GM12878 (cell line): ENCODE measurements at regions of chr3 and their contacts with region 1.

Region 1: DNA sequence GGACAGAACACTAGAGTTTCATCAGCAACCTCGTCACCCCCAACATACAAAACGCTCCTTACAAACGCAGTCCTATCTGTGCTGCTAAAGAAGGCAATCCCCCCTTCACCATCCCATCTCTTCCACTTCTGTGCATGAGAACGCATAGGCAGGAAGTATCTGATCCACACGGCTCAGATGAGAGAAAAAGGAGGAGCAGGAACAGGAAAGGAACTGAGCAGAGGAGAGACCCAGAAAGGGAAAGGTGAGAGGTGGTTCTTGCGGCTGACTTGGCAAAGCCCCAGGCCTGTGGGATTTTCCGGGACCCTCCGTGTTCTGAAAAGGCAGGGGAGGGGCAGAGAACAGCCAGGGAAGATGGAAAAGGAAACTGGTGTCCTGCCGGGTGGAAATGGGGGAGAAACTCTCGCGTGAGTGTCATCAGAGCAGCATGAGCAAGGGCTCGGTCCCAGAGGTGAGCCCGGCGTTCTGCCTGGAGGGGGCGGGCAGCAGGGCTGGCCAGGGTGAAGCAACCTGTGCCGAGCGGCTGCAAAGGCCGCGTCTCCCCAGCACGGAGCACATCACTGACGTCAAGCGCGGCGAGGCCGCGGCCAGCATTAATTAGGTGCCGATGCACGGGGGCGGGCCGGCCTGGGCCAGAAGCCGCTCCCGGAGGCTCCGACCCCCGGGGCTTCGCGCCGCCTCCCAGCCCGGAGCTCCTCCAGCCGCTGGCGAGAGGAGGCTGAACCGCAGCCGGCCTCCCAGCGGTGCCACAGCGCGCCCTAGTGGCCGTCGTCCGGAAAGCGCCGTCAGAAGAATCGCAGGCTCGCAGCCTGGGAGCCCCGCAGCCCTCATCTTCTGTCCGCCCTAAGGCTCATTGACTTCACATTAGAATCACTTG is 35.8 kb downstream of the CPN2 start:
- DNase-seq: peak; percentile 38
- ATAC-seq: peak; percentile 95
- H3K4me3 ChIP-seq: peak overlapping the region; percentile 57
- H3K27ac ChIP-seq: no peak overlapping the region
- H3K4me1 ChIP-seq: peaks cover 6% of the 10 kb centered on the region
- H3K27me3 ChIP-seq: no peaks in the 10 kb centered on the region; a peak in 1 of 4 replicates
- CTCF ChIP-seq: peak; percentile 82 to 96 (median 92)
- EP300 ChIP-seq: no peak
- POLR2A ChIP-seq: no peak
- RAD21 ChIP-seq: peak; percentile 98

Region 2: GRCh38 chr3:193780810-193781472 is 534.4 kb before region 1 on chr3:
- CTCF ChIA-PET with region 1: interaction called, 53 read pairs
- POLR2A ChIA-PET with region 1: no interaction called
- RAD21 ChIA-PET with region 1: interaction called, 21 read pairs
- SMC1A ChIA-PET with region 1: interaction called, 11 read pairs
- in situ Hi-C with region 1: loop called (anchors 5 kb)
- intact Hi-C with region 1: loop called (anchors 2 kb)
- DNase-seq: no peak
- ATAC-seq: peak; percentile 56
- H3K4me3 ChIP-seq: no peak overlapping the region
- H3K27ac ChIP-seq: no peak overlapping the region
- H3K4me1 ChIP-seq: no peaks in the 10 kb centered on the region
- H3K27me3 ChIP-seq: peaks cover 0 to 3% of the 10 kb centered on the region in 2 experiments; a peak in 2 of 4 replicates
- CTCF ChIP-seq: peak; percentile 47 to 62 (median 48); a peak in 5 of 6 replicates
- EP300 ChIP-seq: no peak
- POLR2A ChIP-seq: no peak
- RAD21 ChIP-seq: peak; percentile 85

Region 3: DNA sequence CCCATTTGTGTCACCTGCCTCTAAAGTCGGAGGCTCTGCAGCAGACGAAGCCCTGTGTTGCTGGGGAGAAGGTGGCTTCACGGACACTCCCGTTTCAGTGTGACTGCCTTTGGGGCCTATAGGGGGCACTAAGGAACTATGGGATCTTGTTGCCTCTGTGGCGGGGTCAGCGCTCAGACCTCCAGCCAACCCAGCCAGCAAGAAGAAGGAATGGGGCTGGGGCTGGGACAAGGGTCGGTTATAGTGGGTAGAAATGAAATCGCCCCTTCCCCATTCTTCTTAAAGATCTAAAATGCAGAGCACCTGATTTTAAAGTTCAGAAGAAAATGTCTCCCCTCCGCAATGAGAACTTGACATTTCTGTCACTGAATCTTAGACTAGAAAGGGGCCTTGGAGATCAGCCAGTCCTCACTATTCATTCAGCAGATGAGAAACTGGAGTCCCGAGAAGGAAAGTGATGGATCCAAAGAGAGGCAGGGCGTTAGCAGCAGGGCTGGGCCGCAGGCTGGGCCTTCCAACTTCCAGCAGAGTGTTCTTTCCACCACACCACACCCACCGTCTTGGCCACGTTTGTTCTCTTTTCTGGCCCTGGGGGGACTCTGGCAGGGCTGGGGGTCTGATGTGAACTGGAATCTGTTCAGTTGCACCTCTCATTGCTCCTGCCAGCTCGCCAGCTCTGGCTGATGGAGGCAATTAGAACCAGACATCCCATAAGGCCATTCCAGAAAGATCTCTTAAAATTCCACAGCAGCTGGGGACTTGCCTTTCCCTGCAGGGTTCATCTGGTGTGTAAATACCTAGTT is 526.9 kb before region 1 on chr3:
- CTCF ChIA-PET with region 1: interaction called, 18 read pairs
- POLR2A ChIA-PET with region 1: no interaction called
- RAD21 ChIA-PET with region 1: interaction called, 6 read pairs
- SMC1A ChIA-PET with region 1: interaction called, 4 read pairs
- in situ Hi-C with region 1: loop called (anchors 5 kb)
- intact Hi-C with region 1: loop called (anchors 2 kb)
- DNase-seq: peak; percentile 9
- ATAC-seq: peak; percentile 98
- H3K4me3 ChIP-seq: no peak overlapping the region
- H3K27ac ChIP-seq: no peak overlapping the region
- H3K4me1 ChIP-seq: no peaks in the 10 kb centered on the region
- H3K27me3 ChIP-seq: no peaks in the 10 kb centered on the region; a peak in 1 of 4 replicates
- CTCF ChIP-seq: peak; percentile 69 to 76 (median 76)
- EP300 ChIP-seq: no peak
- POLR2A ChIP-seq: no peak
- RAD21 ChIP-seq: peak; percentile 85

Region 4: GRCh38 chr3:193971261-193971751 is 344.0 kb before region 1 on chr3:
- CTCF ChIA-PET with region 1: interaction called, 3 read pairs
- POLR2A ChIA-PET with region 1: no interaction called
- RAD21 ChIA-PET with region 1: interaction called, 3 read pairs
- SMC1A ChIA-PET with region 1: no interaction called
- in situ Hi-C with region 1: no loop called
- intact Hi-C with region 1: loop called (anchors 10 kb)
- DNase-seq: peak; percentile 58
- ATAC-seq: peak; percentile 83
- H3K4me3 ChIP-seq: peak overlapping the region; percentile 23; the same call in 1 of the 2 replicates
- H3K27ac ChIP-seq: peak overlapping the region; percentile 35; the same call in 1 of the 2 replicates
- H3K4me1 ChIP-seq: peaks cover 14% of the 10 kb centered on the region
- H3K27me3 ChIP-seq: peaks cover 0 to 1% of the 10 kb centered on the region in 2 experiments; a peak in 2 of 4 replicates
- CTCF ChIP-seq: no peak
- EP300 ChIP-seq: no peak
- POLR2A ChIP-seq: no peak
- RAD21 ChIP-seq: no peak

Region 5: DNA sequence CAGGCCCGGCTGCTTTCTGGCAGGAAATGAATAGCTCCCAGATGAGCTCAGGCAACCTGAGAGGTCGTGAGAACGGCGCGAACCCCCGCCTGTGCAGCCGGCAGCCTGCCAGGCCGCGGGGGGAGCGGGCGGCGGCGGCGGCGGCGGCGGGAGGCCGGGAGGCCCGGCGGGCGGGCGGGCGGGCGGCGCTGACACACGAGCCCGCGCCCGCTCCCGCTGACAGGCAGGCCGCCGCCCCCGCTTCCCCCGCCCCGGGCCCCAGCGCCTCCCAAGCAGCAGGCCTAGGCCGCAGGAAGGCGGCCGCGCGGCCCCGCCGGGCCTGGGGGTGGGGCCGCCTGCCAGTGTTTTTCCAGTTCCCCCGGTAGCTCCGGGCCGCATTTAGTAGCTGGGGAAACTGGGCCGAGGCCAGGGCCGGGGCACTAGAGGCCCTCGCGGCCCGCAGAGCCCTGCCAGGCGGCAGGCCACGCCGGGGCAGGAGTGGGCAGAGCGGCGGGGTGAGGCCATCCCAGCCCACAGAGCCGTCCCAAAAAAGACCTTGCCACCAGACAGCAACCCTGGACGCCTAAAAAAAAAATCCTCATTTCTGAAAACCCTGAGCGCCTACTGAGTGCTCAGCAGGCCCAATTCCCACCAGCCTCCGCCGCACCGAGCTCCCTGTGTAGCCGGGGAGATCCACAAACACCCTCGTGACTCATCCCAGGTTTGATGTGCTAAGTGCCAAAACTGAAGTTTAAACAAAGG is 173.7 kb before region 1 on chr3:
- CTCF ChIA-PET with region 1: interaction called, 9 read pairs
- POLR2A ChIA-PET with region 1: no interaction called
- RAD21 ChIA-PET with region 1: interaction called, 5 read pairs
- SMC1A ChIA-PET with region 1: interaction called, 12 read pairs
- in situ Hi-C with region 1: no loop called
- intact Hi-C with region 1: loop called (anchors 2 kb)
- DNase-seq: no peak
- ATAC-seq: peak; percentile 56
- H3K4me3 ChIP-seq: peak overlapping the region; percentile 58; the same call in 1 of the 2 replicates
- H3K27ac ChIP-seq: no peak overlapping the region
- H3K4me1 ChIP-seq: peaks cover 9% of the 10 kb centered on the region
- H3K27me3 ChIP-seq: peaks cover 0 to 4% of the 10 kb centered on the region in 2 experiments; a peak in 3 of 4 replicates
- CTCF ChIP-seq: no peak
- EP300 ChIP-seq: no peak
- POLR2A ChIP-seq: peak; percentile 4; the same call in 1 of the 2 replicates
- RAD21 ChIP-seq: no peak

Region 6: DNA sequence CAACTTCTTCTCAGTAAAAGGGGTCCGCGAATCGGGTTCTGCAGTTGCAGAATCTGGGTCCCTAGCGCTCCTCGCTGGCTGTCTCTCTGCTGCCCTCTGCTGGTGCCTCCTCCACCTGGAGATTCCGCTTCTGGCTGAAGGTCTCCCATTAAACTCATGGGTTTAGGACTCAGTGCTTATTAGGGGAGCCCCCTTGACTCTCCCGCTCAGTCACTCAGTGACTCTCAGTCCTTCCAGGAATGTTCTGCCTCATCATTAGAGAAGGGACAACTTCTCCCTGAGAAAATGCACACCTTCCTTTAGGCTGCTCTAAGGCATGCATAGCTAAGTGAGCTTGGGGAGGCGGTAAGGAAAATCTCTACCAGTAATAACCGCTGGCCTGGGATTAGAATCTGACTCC is 28.7 kb after region 1 on chr3:
- CTCF ChIA-PET with region 1: interaction called, 11 read pairs
- POLR2A ChIA-PET with region 1: no interaction called
- RAD21 ChIA-PET with region 1: no interaction called
- SMC1A ChIA-PET with region 1: interaction called, 5 read pairs
- in situ Hi-C with region 1: no loop called
- intact Hi-C with region 1: no loop called
- DNase-seq: no peak
- ATAC-seq: peak; percentile 89
- H3K4me3 ChIP-seq: no peak overlapping the region
- H3K27ac ChIP-seq: no peak overlapping the region
- H3K4me1 ChIP-seq: no peaks in the 10 kb centered on the region
- H3K27me3 ChIP-seq: no peaks in the 10 kb centered on the region; a peak in 3 of 4 replicates
- CTCF ChIP-seq: peak; percentile 84 to 97 (median 91)
- EP300 ChIP-seq: no peak
- POLR2A ChIP-seq: no peak
- RAD21 ChIP-seq: peak; percentile 64

Region 7: GRCh38 chr3:194985031-194985578 is 669.8 kb after region 1 on chr3:
- CTCF ChIA-PET with region 1: no interaction called
- POLR2A ChIA-PET with region 1: no interaction called
- RAD21 ChIA-PET with region 1: no interaction called
- SMC1A ChIA-PET with region 1: no interaction called
- in situ Hi-C with region 1: no loop called
- intact Hi-C with region 1: no loop called
- DNase-seq: no peak
- ATAC-seq: no peak
- H3K4me3 ChIP-seq: no peak overlapping the region
- H3K27ac ChIP-seq: no peak overlapping the region
- H3K4me1 ChIP-seq: no peaks in the 10 kb centered on the region
- H3K27me3 ChIP-seq: no peaks in the 10 kb centered on the region; a peak in 3 of 4 replicates
- CTCF ChIP-seq: no peak
- EP300 ChIP-seq: no peak
- POLR2A ChIP-seq: no peak
- RAD21 ChIP-seq: no peak

Region 8: DNA sequence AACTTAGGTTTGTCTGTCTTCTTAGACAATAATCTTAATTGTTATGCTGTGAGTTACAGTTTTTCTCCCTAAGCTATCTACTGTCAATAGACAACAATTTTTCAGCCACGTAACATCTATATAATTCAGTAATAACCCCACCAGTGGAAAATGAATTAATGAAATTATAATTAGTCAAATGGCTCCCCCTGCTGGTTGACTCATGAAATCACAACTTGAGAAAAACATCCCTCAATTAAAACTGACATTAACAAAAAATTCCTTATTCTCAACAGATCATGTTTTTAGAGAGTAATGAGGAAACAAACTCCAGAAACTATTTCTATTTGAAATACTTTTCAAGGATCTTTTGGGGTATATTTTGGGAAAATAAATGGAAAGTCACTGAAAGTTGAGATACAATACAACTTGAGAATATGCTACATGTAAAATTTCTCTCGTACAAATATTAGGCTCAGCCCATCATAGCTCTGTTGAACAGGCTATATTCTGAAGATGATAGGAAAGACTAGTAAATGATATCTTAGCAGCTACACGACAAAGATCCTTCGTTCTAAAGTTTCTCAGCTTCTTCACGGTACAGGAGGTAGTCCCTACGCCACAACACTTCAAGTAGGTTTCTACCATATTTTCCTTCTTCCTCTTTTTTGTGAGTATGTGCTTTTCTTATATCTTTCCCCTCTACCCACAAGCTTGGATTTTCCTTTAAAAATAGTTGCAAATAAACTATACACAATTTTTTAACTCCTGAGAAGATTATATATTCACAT is 1207.1 kb after region 1 on chr3:
- CTCF ChIA-PET with region 1: no interaction called
- POLR2A ChIA-PET with region 1: no interaction called
- RAD21 ChIA-PET with region 1: no interaction called
- SMC1A ChIA-PET with region 1: no interaction called
- in situ Hi-C with region 1: no loop called
- intact Hi-C with region 1: no loop called
- DNase-seq: no peak
- ATAC-seq: peak; percentile 22; the same call in 2 of the 3 replicates
- H3K4me3 ChIP-seq: no peak overlapping the region
- H3K27ac ChIP-seq: no peak overlapping the region
- H3K4me1 ChIP-seq: no peaks in the 10 kb centered on the region
- H3K27me3 ChIP-seq: no peaks in the 10 kb centered on the region
- CTCF ChIP-seq: peak; percentile 27 to 65 (median 48); a peak in 5 of 6 replicates
- EP300 ChIP-seq: no peak
- POLR2A ChIP-seq: no peak
- RAD21 ChIP-seq: peak; percentile 69